Endothelial cell of umbilical vein (primary cell): ENCODE measurements at regions of chr6 and their contacts with region 1.

Region 1: DNA sequence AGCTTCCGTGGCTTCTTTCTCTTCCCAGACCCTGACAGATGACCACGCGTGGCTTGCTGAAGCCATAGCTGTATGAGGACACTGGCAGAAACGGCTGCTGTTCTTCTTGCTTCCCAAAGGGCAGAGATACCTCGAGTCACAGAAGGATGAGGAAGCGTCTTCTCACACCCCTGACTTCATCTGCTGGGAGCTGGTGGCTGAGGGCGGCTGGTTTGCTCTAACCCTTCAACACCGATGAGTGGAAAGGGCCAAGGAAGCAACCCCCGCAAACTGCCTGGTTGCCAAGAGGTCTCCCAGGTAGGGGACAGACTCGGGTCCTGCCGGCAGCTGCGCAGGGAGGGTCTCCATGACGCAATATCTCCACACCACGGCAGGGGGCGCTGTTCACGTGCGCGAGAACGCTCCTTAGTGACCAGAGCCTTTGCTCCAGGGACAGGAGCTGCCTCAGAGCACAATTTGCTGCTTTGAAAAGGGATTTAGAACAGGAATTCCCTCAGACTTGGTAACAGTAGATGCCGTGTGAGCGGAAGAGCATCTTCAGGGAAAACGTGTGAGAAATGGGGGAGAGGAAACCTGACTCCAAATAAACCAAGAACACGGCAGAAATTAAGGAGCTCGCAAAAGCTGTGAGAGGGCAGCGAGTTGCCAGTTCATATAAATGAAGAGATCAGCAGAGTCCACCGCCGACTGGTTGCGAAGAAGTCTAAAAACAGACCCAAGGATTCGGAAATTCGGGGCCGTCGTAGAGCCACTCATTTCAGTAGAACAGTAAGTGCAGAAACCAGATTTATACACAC is 80.2 kb downstream of the ERMARD start:
- DNase-seq: peak; percentile 77
- H3K4me3 ChIP-seq: no peak overlapping the region
- H3K27ac ChIP-seq: no peak overlapping the region
- H3K4me1 ChIP-seq: peaks cover 14% of the 10 kb centered on the region
- H3K27me3 ChIP-seq: peaks cover 0 to 1% of the 10 kb centered on the region in 2 experiments
- CTCF ChIP-seq: peak; percentile 85 to 93
- POLR2A ChIP-seq: no peak

Region 2: DNA sequence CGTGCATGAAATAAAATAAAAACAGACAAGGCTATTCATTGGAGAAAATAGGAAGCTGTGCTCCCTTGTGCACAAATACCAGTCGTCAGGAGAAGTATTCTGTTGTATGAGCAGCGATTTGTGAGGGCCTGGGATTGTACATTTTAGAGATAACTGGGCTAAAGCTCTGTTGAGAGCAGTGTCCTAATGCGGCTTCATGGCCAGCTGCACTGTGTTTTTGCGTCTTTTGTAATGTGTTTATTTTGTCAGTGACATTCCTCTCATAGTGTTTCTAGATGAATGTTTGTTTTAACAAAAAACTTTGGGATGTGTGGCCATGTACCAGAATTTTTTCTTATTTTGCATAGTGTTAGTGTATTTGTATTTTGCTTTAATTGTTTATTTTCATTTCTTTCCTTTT is 65.4 kb before region 1 on chr6:
- CTCF ChIA-PET with region 1: no interaction called
- POLR2A ChIA-PET with region 1: no interaction called
- dilution Hi-C with region 1: no loop called
- intact Hi-C with region 1: no loop called
- DNase-seq: no peak
- H3K4me3 ChIP-seq: no peak overlapping the region
- H3K27ac ChIP-seq: no peak overlapping the region
- H3K4me1 ChIP-seq: no peaks in the 10 kb centered on the region
- H3K27me3 ChIP-seq: no peaks in the 10 kb centered on the region
- CTCF ChIP-seq: no peak
- POLR2A ChIP-seq: no peak

Region 3: DNA sequence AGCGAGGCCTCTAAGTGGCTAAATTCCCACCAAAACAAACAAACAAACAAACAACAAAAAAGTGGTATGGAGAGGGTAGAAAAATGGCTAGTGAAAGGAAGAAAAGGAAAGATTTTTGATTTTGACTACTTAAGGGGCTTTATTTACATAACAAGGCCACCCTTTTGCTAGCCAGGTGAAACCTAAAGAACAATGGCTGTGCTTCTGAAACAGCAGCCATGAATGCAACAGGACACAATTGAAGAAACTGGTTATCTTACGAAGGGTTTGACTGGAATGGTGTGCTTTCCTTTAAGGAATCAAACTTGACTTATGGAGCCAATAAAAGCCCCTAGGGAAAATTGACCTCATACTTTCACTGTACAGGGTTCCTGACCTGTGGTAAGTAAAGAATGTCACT is 11.3 kb before region 1 on chr6:
- CTCF ChIA-PET with region 1: interaction called, 16 read pairs
- POLR2A ChIA-PET with region 1: no interaction called
- dilution Hi-C with region 1: no loop called
- intact Hi-C with region 1: no loop called
- DNase-seq: no peak
- H3K4me3 ChIP-seq: no peak overlapping the region
- H3K27ac ChIP-seq: no peak overlapping the region
- H3K4me1 ChIP-seq: no peaks in the 10 kb centered on the region
- H3K27me3 ChIP-seq: peaks cover 0 to 2% of the 10 kb centered on the region in 2 experiments
- CTCF ChIP-seq: no peak
- POLR2A ChIP-seq: no peak

Region 4: GRCh38 chr6:169898797-169899480 is 67.3 kb after region 1 on chr6:
- CTCF ChIA-PET with region 1: interaction called, 42 read pairs
- POLR2A ChIA-PET with region 1: no interaction called
- dilution Hi-C with region 1: no loop called
- intact Hi-C with region 1: loop called (anchors 5 kb)
- DNase-seq: peak; percentile 92
- H3K4me3 ChIP-seq: no peak overlapping the region
- H3K27ac ChIP-seq: peak overlapping the region; percentile 2
- H3K4me1 ChIP-seq: peaks cover 13% of the 10 kb centered on the region
- H3K27me3 ChIP-seq: no peaks in the 10 kb centered on the region
- CTCF ChIP-seq: no peak
- POLR2A ChIP-seq: no peak

Region 5: GRCh38 chr6:169959136-169960002 is 127.7 kb after region 1 on chr6:
- CTCF ChIA-PET with region 1: interaction called, 70 read pairs
- POLR2A ChIA-PET with region 1: no interaction called
- dilution Hi-C with region 1: no loop called
- intact Hi-C with region 1: loop called (anchors 1 kb)
- DNase-seq: peak; percentile 26
- H3K4me3 ChIP-seq: no peak overlapping the region
- H3K27ac ChIP-seq: no peak overlapping the region
- H3K4me1 ChIP-seq: peaks cover 4% of the 10 kb centered on the region
- H3K27me3 ChIP-seq: peaks cover 0 to 3% of the 10 kb centered on the region in 2 experiments
- CTCF ChIP-seq: peak in 1 of 2 donors; percentile 10
- POLR2A ChIP-seq: no peak

Region 6: GRCh38 chr6:170102582-170103481 is 271.2 kb after region 1 on chr6:
- CTCF ChIA-PET with region 1: interaction called, 3 read pairs
- POLR2A ChIA-PET with region 1: no interaction called
- dilution Hi-C with region 1: no loop called
- intact Hi-C with region 1: loop called (anchors 10 kb)
- DNase-seq: no peak
- H3K4me3 ChIP-seq: no peak overlapping the region
- H3K27ac ChIP-seq: no peak overlapping the region
- H3K4me1 ChIP-seq: no peaks in the 10 kb centered on the region
- H3K27me3 ChIP-seq: no peaks in the 10 kb centered on the region
- CTCF ChIP-seq: no peak
- POLR2A ChIP-seq: no peak

Region 7: DNA sequence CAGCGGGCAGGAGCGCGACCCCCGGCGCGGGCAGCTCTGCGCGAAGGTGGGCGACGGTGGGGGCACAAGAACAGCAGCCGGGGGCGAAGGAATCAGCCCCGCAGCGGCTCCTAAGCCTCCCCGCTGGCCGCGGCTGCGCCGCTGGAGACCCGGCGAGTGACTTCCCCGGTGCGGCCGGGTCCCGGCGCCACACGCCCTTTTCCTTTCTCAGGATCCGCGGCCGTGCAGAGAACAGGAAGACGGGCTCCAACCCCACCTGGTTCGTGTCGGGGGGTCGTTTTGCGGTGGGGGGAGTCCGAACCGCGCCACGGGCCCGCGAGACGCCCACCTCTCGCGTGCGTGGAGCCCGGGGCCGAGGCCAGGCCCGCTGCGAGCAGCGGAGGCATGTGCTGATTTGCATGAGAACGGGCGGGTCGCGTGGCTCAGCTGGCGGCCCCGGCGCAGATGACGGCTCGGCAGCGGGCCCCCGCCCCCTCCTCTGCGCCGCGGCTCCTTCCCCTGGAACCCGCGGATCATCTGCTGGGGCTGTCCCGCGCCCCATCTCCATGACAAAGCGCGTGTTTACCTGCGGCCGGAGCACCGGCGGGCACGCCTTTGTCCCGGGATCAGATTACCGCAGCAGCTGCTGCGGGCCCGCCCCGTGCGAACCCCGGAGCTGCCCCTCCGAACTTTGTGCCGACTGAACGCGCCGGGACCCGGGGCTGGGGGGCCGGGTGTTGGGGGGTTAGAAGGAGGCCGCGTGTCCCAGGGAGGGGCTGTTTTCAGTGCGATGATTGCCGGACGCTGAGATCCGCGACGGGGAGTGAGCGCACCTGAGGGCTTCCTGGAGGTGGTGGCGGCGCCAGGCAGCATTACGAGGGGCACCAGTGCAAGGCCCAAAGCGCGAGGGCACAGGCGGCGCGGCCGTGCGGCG is 464.1 kb after region 1 on chr6:
- CTCF ChIA-PET with region 1: interaction called, 62 read pairs
- POLR2A ChIA-PET with region 1: no interaction called
- dilution Hi-C with region 1: no loop called
- intact Hi-C with region 1: loop called (anchors 2 kb)
- DNase-seq: peak; percentile 21
- H3K4me3 ChIP-seq: peak overlapping the region; percentile 14 to 36 (median 34)
- H3K27ac ChIP-seq: no peak overlapping the region
- H3K4me1 ChIP-seq: peaks cover 17% of the 10 kb centered on the region
- H3K27me3 ChIP-seq: peaks cover 29 to 62% of the 10 kb centered on the region in 2 experiments
- CTCF ChIP-seq: no peak
- POLR2A ChIP-seq: no peak

Region 8: DNA sequence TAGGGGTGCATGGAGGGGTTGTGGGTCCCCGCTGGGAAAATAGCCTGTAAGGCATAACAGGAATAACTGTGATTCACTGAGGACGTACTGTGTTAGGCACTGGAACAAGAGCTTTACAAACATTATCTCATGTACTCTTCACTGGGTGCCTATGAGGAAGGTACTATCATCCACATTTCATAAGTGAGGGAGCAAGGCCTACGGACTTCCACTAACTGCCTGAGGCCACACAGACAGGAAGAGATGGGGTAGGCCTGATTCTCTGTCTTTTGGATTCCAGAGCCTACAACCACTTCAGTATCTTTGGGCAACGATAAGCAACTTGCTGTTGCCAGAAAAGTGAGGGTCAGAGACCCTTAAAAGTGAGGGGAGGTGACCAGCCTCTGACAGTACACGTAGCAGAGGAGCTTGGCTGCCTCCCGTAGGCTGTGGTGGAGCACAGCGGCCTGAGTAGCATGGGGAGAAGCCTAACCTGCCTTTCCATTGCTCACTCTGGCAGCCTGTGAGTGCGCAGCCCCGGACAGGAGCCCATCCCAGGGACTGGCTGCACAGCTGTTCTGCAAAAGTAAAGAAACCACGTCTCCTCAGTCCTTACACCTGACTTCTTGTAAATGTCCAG is 691.0 kb after region 1 on chr6:
- CTCF ChIA-PET with region 1: interaction called, 120 read pairs
- POLR2A ChIA-PET with region 1: no interaction called
- dilution Hi-C with region 1: no loop called
- intact Hi-C with region 1: loop called (anchors 1 kb)
- DNase-seq: peak; percentile 21
- H3K4me3 ChIP-seq: no peak overlapping the region
- H3K27ac ChIP-seq: no peak overlapping the region
- H3K4me1 ChIP-seq: peaks cover 5% of the 10 kb centered on the region
- H3K27me3 ChIP-seq: peaks cover 2 to 7% of the 10 kb centered on the region in 2 experiments
- CTCF ChIP-seq: peak; percentile 13 to 41
- POLR2A ChIP-seq: no peak